ENCODE measurements at regions of chr15 and their contacts with region 1.

Region 1: DNA sequence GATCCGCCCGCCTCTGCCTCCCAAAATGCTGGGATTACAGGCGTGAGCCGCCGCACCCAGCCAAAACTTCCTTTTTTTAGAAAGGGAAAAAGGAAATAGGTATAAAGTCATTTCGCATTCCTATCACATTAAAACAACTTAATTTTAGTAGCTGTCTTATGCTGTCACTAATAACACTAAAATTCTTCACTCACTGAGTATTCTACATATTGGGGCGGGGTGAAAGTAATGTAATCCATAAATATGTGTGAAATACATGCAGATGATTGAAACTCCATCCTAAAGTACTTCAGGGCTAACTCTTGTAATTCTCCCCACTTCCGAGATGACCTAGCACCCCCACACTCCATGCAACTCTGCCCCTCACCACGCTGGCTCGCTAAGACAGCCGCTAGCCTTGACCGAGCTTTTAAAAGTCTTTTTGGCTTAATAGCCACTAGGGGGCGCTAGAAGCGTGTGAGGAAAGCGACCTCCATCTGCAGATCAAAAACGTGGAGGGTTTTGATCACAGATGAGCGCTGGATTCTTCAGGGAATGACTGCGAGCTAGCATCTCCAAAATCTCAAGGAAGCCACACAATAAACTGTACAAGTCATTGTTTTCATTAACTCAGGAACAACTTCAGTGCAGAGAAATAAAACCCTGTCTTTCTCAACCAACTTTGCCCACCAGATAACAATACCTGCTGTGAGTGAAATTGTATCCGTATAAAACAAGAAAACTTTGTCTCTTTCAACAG is 129.3 kb upstream of the IGF1R start:
- DNase-seq: peak; percentile 76
- ATAC-seq: peak; percentile 94
- H3K4me3 ChIP-seq: no peak overlapping the region
- H3K27ac ChIP-seq: no peak overlapping the region
- H3K4me1 ChIP-seq: no peaks in the 10 kb centered on the region
- H3K27me3 ChIP-seq: peaks cover 4% of the 10 kb centered on the region
- CTCF ChIP-seq: peak; percentile 76
- POLR2A ChIP-seq: no peak
- RAD21 ChIP-seq: peak; percentile 80

Region 2: GRCh38 chr15:98568382-98569017 is 49.5 kb after region 1 on chr15:
- CTCF ChIA-PET with region 1: interaction called, 10 read pairs
- POLR2A ChIA-PET with region 1: no interaction called
- dilution Hi-C with region 1: no loop called
- in situ Hi-C with region 1: no loop called
- intact Hi-C with region 1: no loop called
- DNase-seq: no peak
- ATAC-seq: no peak
- H3K4me3 ChIP-seq: no peak overlapping the region
- H3K27ac ChIP-seq: no peak overlapping the region
- H3K4me1 ChIP-seq: peaks cover 7% of the 10 kb centered on the region; the same call in 1 of the 2 replicates
- H3K27me3 ChIP-seq: no peaks in the 10 kb centered on the region
- CTCF ChIP-seq: peak; percentile 39; the same call in 1 of the 2 replicates
- POLR2A ChIP-seq: no peak
- RAD21 ChIP-seq: no peak

Region 3: GRCh38 chr15:98626153-98626552 is 107.2 kb after region 1 on chr15:
- CTCF ChIA-PET with region 1: no interaction called
- POLR2A ChIA-PET with region 1: no interaction called
- dilution Hi-C with region 1: no loop called
- in situ Hi-C with region 1: no loop called
- intact Hi-C with region 1: no loop called
- DNase-seq: no peak
- ATAC-seq: no peak
- H3K4me3 ChIP-seq: no peak overlapping the region
- H3K27ac ChIP-seq: no peak overlapping the region
- H3K4me1 ChIP-seq: no peaks in the 10 kb centered on the region
- H3K27me3 ChIP-seq: peaks cover 32% of the 10 kb centered on the region
- CTCF ChIP-seq: no peak
- POLR2A ChIP-seq: no peak
- RAD21 ChIP-seq: no peak

Region 4: DNA sequence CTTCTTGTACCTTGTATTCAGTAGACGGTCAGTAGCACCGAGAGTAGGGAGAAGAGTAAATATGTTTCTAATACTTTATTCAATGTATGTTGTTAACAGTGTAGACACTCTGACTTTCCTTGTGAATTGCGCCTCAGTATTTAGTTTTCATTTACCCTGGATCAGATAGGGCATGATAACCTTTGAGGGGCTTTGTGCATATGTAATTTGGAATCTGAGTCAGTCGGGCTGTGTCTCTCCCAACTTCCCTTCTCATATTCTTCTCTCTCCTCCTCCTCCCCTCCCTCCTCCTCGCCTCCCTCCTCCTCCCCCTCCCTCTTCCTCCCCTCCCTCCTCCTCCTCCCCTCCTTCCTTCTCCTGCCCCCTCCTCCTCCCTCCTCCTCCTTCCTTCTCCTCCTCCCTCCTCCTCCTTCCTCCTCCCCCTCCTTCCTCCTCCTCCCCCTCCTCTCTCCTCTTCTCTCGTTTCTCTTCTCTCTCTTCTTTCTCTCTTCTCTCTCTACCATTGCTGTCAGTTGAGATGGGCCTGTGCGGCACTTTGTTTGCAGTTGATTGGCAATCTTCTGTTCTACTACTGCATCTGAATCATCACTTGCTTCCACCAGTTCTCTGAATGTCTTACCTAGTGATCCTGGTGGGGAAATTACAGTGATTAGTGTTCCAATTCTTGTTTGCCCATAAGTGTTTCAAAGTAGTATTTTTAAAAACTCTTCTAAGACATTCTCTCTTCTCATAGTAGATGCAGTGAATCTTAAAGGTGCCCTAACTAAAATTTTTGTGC is 326.3 kb after region 1 on chr15:
- CTCF ChIA-PET with region 1: interaction called, 6 read pairs
- POLR2A ChIA-PET with region 1: no interaction called
- dilution Hi-C with region 1: no loop called
- in situ Hi-C with region 1: loop called (anchors 10 kb)
- intact Hi-C with region 1: no loop called
- DNase-seq: no peak
- ATAC-seq: peak; percentile 43; the same call in 1 of the 2 replicates
- H3K4me3 ChIP-seq: no peak overlapping the region
- H3K27ac ChIP-seq: peak overlapping the region; percentile 9; the same call in 1 of the 2 replicates
- H3K4me1 ChIP-seq: peaks cover 21% of the 10 kb centered on the region
- H3K27me3 ChIP-seq: no peaks in the 10 kb centered on the region
- CTCF ChIP-seq: no peak
- POLR2A ChIP-seq: no peak
- RAD21 ChIP-seq: no peak

Region 5: GRCh38 chr15:99076552-99077308 is 557.7 kb after region 1 on chr15:
- CTCF ChIA-PET with region 1: interaction called, 8 read pairs
- POLR2A ChIA-PET with region 1: no interaction called
- dilution Hi-C with region 1: no loop called
- in situ Hi-C with region 1: loop called (anchors 5 kb)
- intact Hi-C with region 1: loop called (anchors 1 kb)
- DNase-seq: peak; percentile 86
- ATAC-seq: peak; percentile 94
- H3K4me3 ChIP-seq: peak overlapping the region; percentile 19; the same call in 1 of the 2 replicates
- H3K27ac ChIP-seq: peak overlapping the region; percentile 14
- H3K4me1 ChIP-seq: no peaks in the 10 kb centered on the region
- H3K27me3 ChIP-seq: no peaks in the 10 kb centered on the region
- CTCF ChIP-seq: peak; percentile 91
- POLR2A ChIP-seq: no peak
- RAD21 ChIP-seq: peak; percentile 96

Region 6: GRCh38 chr15:99250494-99251435 is 731.8 kb after region 1 on chr15:
- CTCF ChIA-PET with region 1: no interaction called
- POLR2A ChIA-PET with region 1: interaction called, 12 read pairs
- dilution Hi-C with region 1: no loop called
- in situ Hi-C with region 1: no loop called
- intact Hi-C with region 1: no loop called
- DNase-seq: peak; percentile 99
- ATAC-seq: peak; percentile 95
- H3K4me3 ChIP-seq: peak overlapping the region; percentile 97
- H3K27ac ChIP-seq: peak overlapping the region; percentile 79
- H3K4me1 ChIP-seq: peaks cover 5% of the 10 kb centered on the region
- H3K27me3 ChIP-seq: no peaks in the 10 kb centered on the region
- CTCF ChIP-seq: no peak
- POLR2A ChIP-seq: peak; percentile 94
- RAD21 ChIP-seq: no peak

Measured in IMR-90 (cell line).